ENCODE measurements at regions of chr15 and their contacts with region 1.

Region 1: DNA sequence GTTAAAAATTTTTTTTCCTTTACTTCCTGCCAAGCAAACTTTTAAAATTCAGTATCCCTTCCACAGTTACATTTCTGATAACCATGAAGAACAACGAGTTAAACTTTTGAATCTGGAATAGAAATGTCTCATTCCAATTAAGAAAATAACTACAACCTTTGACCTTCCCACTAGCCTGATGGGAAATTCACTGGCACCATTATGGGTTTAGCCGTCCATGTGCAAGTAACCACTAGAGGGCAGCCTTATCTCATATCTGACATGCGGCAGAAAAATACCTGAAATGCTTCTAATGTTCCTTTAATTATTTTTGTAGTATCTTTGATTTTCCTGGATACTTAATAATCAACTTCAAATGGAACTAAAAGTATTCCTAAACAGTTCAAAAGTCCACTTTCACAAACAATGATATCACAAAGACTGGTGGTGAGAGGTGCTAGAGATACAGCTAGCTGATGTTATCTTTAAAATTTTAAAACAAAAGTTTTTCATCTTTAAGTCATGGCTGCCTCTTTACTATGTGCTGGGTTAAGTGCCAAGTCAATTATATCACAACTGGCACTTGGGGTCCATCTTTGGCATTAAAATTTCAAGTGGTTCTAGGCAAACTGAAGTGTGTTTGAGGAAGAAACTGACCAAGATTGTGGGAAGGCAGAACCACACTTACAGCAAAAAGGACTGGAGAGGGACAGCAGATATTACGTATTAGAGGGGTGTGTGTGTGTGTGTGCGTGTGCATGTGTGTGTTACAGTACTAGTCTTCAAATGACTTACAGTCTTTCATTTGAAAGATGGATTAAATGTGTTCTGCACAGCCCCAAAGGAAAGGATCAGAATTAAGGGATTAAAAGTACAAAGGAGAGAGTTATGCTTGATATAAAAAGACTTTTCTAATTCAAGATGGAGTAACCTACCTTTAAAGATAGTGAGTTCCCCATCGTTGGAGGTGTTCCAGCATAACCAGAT is 107.1 kb upstream of the ICE2 start:
- DNase-seq: peak; percentile 89
- H3K4me3 Mint-ChIP-seq: peak overlapping the region; percentile 75
- H3K27ac Mint-ChIP-seq: peak overlapping the region; percentile 87
- H3K4me1 Mint-ChIP-seq: peaks cover 66% of the 10 kb centered on the region
- H3K27me3 Mint-ChIP-seq: no peaks in the 10 kb centered on the region

Region 2: GRCh38 chr15:59917504-59918157 is 668.4 kb before region 1 on chr15:
- intact Hi-C with region 1: loop called (anchors 10 kb)
- DNase-seq: peak; percentile 92
- H3K4me3 Mint-ChIP-seq: no peak overlapping the region
- H3K27ac Mint-ChIP-seq: peak overlapping the region; percentile 76
- H3K4me1 Mint-ChIP-seq: peaks cover 25% of the 10 kb centered on the region
- H3K27me3 Mint-ChIP-seq: peaks cover 23% of the 10 kb centered on the region

Region 3: GRCh38 chr15:60444289-60444912 is 141.6 kb before region 1 on chr15:
- intact Hi-C with region 1: no loop called
- DNase-seq: no peak
- H3K4me3 Mint-ChIP-seq: no peak overlapping the region
- H3K27ac Mint-ChIP-seq: no peak overlapping the region
- H3K4me1 Mint-ChIP-seq: peaks cover 6% of the 10 kb centered on the region
- H3K27me3 Mint-ChIP-seq: no peaks in the 10 kb centered on the region

Region 4: GRCh38 chr15:60507596-60508424 is 78.2 kb before region 1 on chr15:
- intact Hi-C with region 1: loop called (anchors 2 kb)
- DNase-seq: peak; percentile 88
- H3K4me3 Mint-ChIP-seq: peak overlapping the region; percentile 15
- H3K27ac Mint-ChIP-seq: peak overlapping the region; percentile 62
- H3K4me1 Mint-ChIP-seq: peaks cover 29% of the 10 kb centered on the region
- H3K27me3 Mint-ChIP-seq: no peaks in the 10 kb centered on the region

Region 5: GRCh38 chr15:60574801-60575631 is 11.0 kb before region 1 on chr15:
- intact Hi-C with region 1: loop called (anchors 1 kb)
- DNase-seq: peak; percentile 72
- H3K4me3 Mint-ChIP-seq: peak overlapping the region; percentile 30
- H3K27ac Mint-ChIP-seq: peak overlapping the region; percentile 95
- H3K4me1 Mint-ChIP-seq: peaks cover 71% of the 10 kb centered on the region
- H3K27me3 Mint-ChIP-seq: no peaks in the 10 kb centered on the region

Region 6: GRCh38 chr15:60798821-60799220 is 212.8 kb after region 1 on chr15:
- intact Hi-C with region 1: loop called (anchors 2 kb)
- DNase-seq: no peak
- H3K4me3 Mint-ChIP-seq: peak overlapping the region; percentile 36
- H3K27ac Mint-ChIP-seq: peak overlapping the region; percentile 83
- H3K4me1 Mint-ChIP-seq: peaks cover 49% of the 10 kb centered on the region
- H3K27me3 Mint-ChIP-seq: no peaks in the 10 kb centered on the region

Region 7: GRCh38 chr15:60916679-60917460 is 330.8 kb after region 1 on chr15:
- intact Hi-C with region 1: loop called (anchors 1 kb)
- DNase-seq: peak; percentile 95
- H3K4me3 Mint-ChIP-seq: no peak overlapping the region
- H3K27ac Mint-ChIP-seq: peak overlapping the region; percentile 75
- H3K4me1 Mint-ChIP-seq: peaks cover 27% of the 10 kb centered on the region
- H3K27me3 Mint-ChIP-seq: no peaks in the 10 kb centered on the region

Region 8: GRCh38 chr15:61834076-61834697 is 1248.2 kb after region 1 on chr15:
- intact Hi-C with region 1: loop called (anchors 5 kb)
- DNase-seq: peak; percentile 92
- H3K4me3 Mint-ChIP-seq: no peak overlapping the region
- H3K27ac Mint-ChIP-seq: no peak overlapping the region
- H3K4me1 Mint-ChIP-seq: peaks cover 5% of the 10 kb centered on the region
- H3K27me3 Mint-ChIP-seq: peaks cover 15% of the 10 kb centered on the region

Measured in activated CD4-positive, alpha-beta T cell treated with anti-CD3 and anti-CD28 coated beads, Interleukin-2, amount 10 ng/mL, durations not matched to agents 24 days and 14 days (primary cell).